Heart right ventricle (tissue), 16 donors: ENCODE measurements at regions of chr2 and their contacts with region 1.

Region 1: DNA sequence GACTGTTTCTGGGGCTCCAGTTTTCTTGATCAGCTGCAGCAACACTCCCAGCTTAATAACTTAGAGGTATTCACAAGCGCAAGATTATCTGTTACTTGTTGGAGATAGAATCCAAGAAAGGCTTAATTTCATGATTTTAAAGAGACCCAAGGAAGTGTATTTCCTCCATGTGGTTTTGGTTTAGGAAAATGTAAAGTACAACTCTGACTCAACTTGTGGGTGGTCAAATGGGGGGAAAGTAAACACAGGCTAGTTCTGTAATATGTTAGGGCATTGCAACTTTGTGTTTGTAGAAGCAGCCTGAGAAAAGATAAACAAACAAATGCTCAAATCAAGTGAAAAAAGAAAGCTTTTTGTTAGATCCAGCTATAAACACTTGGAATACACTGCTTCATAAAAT is 90.1 kb upstream of the COL3A1 start:
- DNase-seq: no peak
- ATAC-seq: no peak
- H3K4me3 ChIP-seq: no peak overlapping the region
- H3K27ac ChIP-seq: peak overlapping the region in 1 of 10 donors; percentile 27
- H3K4me1 ChIP-seq: peaks cover 0 to 4% (median 0%) of the 10 kb centered on the region in 9 donors
- H3K27me3 ChIP-seq: no peaks in the 10 kb centered on the region
- CTCF ChIP-seq: no peak

Region 2: DNA sequence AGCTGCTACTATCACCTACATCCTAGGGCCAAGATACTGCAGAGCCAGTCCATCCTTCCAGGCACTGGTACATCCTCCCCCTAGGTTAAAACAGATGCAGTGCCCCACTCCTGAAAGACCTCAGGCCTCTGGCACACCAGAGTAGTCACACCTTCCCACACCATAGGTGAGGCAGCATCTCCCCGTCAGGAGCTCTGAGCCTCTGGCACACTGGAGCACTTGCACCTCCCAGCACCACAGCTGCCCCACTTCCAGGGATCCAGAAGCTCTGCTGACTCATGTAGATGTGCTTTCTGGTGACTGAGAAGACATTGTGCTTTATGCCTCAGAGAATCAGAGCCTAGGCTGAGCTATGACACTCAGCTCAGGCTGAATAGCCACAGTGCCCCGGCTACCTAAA is 48.2 kb before region 1 on chr2:
- intact Hi-C with region 1: no loop called
- DNase-seq: no peak
- ATAC-seq: peak in 1 of 8 donors; percentile 15
- H3K4me3 ChIP-seq: no peak overlapping the region
- H3K27ac ChIP-seq: no peak overlapping the region
- H3K4me1 ChIP-seq: no peaks in the 10 kb centered on the region
- H3K27me3 ChIP-seq: no peaks in the 10 kb centered on the region
- CTCF ChIP-seq: no peak

Region 3: GRCh38 chr2:188909036-188909435 is 25.0 kb after region 1 on chr2:
- intact Hi-C with region 1: no loop called
- DNase-seq: no peak
- ATAC-seq: no peak
- H3K4me3 ChIP-seq: no peak overlapping the region
- H3K27ac ChIP-seq: no peak overlapping the region
- H3K4me1 ChIP-seq: no peaks in the 10 kb centered on the region
- H3K27me3 ChIP-seq: no peaks in the 10 kb centered on the region
- CTCF ChIP-seq: no peak

Region 4: DNA sequence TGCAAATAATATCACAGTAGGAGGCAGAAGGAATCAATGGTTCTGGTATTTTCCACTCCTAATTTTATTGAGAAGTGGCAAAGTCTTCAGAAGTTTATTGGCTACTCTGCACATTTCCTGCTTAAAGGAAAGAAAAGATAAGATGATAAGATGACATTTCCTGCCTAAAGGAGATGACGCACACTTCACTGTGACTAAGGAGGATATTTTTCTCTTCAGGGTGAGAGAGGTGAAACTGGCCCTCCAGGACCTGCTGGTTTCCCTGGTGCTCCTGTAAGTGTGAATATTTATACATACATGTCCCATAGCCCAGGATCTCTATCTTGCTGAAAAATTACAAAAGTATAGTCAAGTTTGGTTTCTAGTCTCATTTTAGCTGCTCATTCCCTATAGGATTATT is 118.0 kb after region 1 on chr2:
- intact Hi-C with region 1: no loop called
- DNase-seq: no peak
- ATAC-seq: peak in 1 of 8 donors; percentile 50
- H3K4me3 ChIP-seq: no peak overlapping the region
- H3K27ac ChIP-seq: peak overlapping the region in 1 of 10 donors; percentile 13
- H3K4me1 ChIP-seq: no peaks in the 10 kb centered on the region
- H3K27me3 ChIP-seq: no peaks in the 10 kb centered on the region
- CTCF ChIP-seq: no peak

Region 5: DNA sequence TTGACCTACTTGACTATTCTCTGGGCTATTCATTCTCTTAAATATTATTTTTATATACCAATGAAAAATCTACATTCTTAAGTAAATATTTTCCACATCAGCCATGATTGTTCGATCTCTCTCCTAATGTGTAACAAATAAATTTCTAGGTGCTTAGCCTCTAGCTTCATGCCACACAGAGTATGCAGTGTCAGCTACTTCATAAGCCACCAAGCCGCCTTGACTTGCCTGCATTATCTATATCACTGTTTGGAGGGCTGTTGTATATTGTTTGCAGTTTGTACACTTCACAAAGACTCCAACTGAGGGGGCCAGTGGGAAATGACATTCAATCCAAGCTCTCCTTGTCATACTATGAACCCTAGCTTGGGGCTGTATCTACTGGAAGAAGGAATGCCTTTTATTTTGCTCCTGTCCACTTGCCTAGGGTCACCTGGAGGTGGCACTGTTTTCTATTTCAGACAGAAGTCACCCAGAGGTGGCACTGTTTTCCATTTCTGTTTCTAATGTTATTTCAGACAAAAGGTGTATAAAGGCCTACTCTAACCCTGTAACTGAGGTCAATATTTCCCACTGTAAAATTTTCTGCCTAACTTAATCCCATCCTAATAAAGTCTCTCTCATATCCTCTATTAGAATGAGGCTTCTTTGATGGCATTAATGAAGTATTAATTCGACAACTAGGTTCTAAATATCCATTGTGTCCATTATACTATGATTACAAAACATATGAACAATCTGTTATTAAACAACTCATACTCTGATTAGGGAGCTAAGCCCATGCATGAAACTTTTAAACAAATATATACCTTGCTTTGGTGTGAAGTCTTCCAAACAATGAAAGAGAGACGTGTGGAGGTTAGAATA is 259.1 kb after region 1 on chr2:
- intact Hi-C with region 1: loop called in 1 of 10 experiments (anchors 5 kb)
- DNase-seq: no peak
- ATAC-seq: no peak
- H3K4me3 ChIP-seq: no peak overlapping the region
- H3K27ac ChIP-seq: peak overlapping the region in 1 of 10 donors; percentile 26
- H3K4me1 ChIP-seq: peaks cover 0 to 8% (median 0%) of the 10 kb centered on the region in 9 donors
- H3K27me3 ChIP-seq: no peaks in the 10 kb centered on the region
- CTCF ChIP-seq: peak in 7 of 9 donors; percentile 18 to 60 (median 44)